Aorta (tissue), 5 donors: ENCODE measurements at regions of chr17 and their contacts with region 1.

Region 1: GRCh38 chr17:903981-904481 is 75.5 kb downstream of the NXN start:
- DNase-seq: peak; percentile 71 to 83
- ATAC-seq: peak; percentile 45
- H3K4me3 ChIP-seq: no peak overlapping the region
- H3K27ac ChIP-seq: peak overlapping the region in 1 of 2 donors; percentile 5
- H3K4me1 ChIP-seq: no peaks in the 10 kb centered on the region
- H3K27me3 ChIP-seq: no peaks in the 10 kb centered on the region

Region 2: GRCh38 chr17:705863-706262 is 198.2 kb before region 1 on chr17:
- intact Hi-C with region 1: no loop called
- DNase-seq: no peak
- ATAC-seq: no peak
- H3K4me3 ChIP-seq: no peak overlapping the region
- H3K27ac ChIP-seq: no peak overlapping the region
- H3K4me1 ChIP-seq: no peaks in the 10 kb centered on the region
- H3K27me3 ChIP-seq: no peaks in the 10 kb centered on the region

Region 3: GRCh38 chr17:951325-952132 is 47.5 kb after region 1 on chr17:
- intact Hi-C with region 1: loop called in 1 of 2 experiments (anchors 10 kb)
- DNase-seq: peak; percentile 72 to 85
- ATAC-seq: peak; percentile 82
- H3K4me3 ChIP-seq: no peak overlapping the region
- H3K27ac ChIP-seq: peak overlapping the region in 1 of 2 donors; percentile 74
- H3K4me1 ChIP-seq: no peaks in the 10 kb centered on the region
- H3K27me3 ChIP-seq: no peaks in the 10 kb centered on the region